Activated T-helper 1 cell treated with anti-CD3 and anti-CD28 coated beads, Interleukin-12 subunit alpha, Interleukin-12 subunit beta, Interleukin-2, Interleukin-4 antibody, amounts not matched to agents 30 ng/mL and 10 ng/mL and 1 ng/mL, durations not matched to agents 14 hours and 24 hours and 36 hours (primary cell): ENCODE measurements at regions of chrX and their contacts with region 1.

Region 1: DNA sequence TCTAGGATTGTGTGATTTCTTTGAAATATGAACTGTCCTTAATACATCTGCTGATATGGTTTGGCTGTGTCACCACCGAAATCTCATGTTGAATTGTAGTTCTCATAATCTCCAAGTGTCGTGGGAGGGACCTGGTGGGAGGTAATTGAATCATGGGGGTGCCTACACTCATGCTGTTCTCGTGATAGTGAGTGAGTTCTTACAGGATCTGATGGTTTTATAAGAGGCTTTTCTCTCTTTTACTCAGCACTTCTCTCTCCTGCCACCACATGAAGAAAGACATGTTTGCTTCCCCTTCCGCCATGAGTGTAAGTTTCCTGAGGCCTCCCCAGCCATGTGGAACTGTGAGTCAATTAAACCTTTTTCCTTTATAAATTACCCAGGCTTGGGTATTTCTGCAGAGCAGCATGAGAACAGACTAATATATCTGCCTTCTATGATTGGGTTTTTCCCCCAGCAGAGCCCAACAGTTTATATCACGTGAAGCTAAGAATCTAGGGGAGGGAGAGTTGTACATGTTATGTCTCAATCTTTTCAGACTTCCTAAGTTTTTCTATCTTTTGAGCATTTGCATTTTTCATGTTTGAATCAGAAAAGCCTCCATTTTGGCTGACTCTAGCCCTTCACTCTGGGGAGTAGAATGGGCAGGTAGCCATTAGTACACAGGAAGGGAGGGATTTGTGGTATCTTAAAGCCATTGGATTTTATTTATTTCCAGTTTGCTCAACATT is 58.9 kb downstream of the PLAC1 start:
- DNase-seq: no peak
- H3K4me3 Mint-ChIP-seq: no peak overlapping the region
- H3K27ac Mint-ChIP-seq: no peak overlapping the region
- H3K4me1 Mint-ChIP-seq: peaks cover 3% of the 10 kb centered on the region
- H3K27me3 Mint-ChIP-seq: peaks cover 13% of the 10 kb centered on the region

Region 2: DNA sequence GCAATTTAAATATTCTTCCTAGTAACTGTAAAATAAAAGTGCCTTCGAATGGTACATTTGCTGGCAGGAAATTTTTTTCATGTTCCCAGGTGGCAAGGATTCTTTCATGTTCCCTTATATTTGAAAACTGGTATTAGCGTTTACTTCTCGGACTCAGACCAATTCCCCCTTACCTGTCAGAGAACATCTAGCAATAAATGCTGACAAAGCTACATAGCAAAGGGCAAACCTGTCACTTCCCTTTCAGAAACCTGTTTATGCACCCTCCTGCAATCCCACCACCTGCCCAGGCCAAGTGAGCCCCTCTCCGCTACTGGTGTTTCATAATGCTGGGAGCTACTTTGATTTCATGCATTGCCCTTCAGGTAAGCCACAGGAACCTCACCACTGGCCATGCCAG is 41.2 kb before region 1 on chrX:
- intact Hi-C with region 1: loop called (anchors 2 kb)
- DNase-seq: no peak
- H3K4me3 Mint-ChIP-seq: no peak overlapping the region
- H3K27ac Mint-ChIP-seq: no peak overlapping the region
- H3K4me1 Mint-ChIP-seq: no peaks in the 10 kb centered on the region
- H3K27me3 Mint-ChIP-seq: peaks cover 12% of the 10 kb centered on the region

Region 3: GRCh38 chrX:134654398-134655012 is 55.2 kb after region 1 on chrX:
- intact Hi-C with region 1: loop called (anchors 1 kb)
- DNase-seq: no peak
- H3K4me3 Mint-ChIP-seq: no peak overlapping the region
- H3K27ac Mint-ChIP-seq: no peak overlapping the region
- H3K4me1 Mint-ChIP-seq: no peaks in the 10 kb centered on the region
- H3K27me3 Mint-ChIP-seq: peaks cover 1% of the 10 kb centered on the region

Region 4: DNA sequence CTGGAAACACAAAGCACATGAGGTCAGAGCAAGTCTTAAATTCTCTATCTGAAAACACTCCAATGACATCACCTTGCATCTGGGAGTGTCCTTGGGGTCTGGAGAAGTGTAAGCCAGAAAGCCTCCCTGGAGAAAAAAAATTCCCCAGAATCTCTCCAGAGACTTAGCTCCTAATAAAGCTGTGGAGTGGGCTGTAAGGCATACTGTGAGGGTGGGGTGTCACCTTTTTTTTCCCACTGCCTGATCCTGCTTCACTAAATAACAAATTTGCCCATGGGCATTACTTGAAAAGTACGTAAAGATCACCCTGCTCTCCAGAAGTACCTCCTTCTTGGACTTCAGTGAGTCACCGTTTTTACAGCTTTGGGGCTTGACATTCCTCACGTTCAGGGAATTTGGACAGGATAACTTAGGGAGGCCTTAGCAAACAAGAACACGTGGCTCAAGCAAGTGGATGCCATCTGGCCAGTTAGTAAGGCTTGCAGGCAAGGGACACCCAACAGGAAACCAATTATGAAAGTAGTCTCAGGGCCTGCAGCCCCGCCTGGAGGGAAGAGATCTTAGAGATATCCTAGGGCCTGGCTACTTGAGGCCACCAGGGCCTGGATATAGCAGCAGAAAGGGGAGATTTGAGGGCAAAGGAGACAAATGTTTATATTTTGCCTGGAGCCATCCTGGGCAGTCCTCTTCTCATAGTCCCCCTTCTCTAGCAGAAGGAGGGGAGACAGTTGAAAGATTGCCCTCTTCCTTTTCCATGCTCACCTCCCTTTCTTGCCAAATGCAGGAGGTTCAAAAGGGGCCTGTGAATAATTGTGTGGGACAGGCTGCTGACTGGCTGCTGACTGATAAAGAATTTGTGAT is 119.0 kb after region 1 on chrX:
- intact Hi-C with region 1: loop called (anchors 1 kb)
- DNase-seq: no peak
- H3K4me3 Mint-ChIP-seq: no peak overlapping the region
- H3K27ac Mint-ChIP-seq: peak overlapping the region; percentile 58
- H3K4me1 Mint-ChIP-seq: peaks cover 10% of the 10 kb centered on the region
- H3K27me3 Mint-ChIP-seq: no peaks in the 10 kb centered on the region

Region 5: DNA sequence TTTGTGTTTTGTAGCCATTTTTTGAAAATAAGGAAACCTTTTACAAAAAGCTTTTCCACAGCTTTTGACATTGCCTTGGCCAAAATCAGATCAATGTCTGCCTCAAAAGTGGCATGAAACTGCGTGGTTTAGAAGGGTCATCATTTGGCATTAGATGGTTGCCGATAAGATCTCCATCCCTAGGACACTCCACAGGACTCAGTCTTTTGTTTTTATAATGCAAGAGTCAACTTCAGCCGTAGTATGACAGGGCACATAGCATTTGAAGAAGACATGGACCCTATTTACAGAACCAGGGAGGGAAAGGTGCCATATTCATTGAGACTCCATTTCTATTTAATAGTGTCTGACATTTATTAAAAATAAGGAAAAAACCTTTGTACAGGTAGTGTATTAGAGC is 451.3 kb after region 1 on chrX:
- intact Hi-C with region 1: no loop called
- DNase-seq: no peak
- H3K4me3 Mint-ChIP-seq: peak overlapping the region; percentile 93
- H3K27ac Mint-ChIP-seq: peak overlapping the region; percentile 87
- H3K4me1 Mint-ChIP-seq: peaks cover 25% of the 10 kb centered on the region
- H3K27me3 Mint-ChIP-seq: no peaks in the 10 kb centered on the region